Dendritic cell treated with granulocyte-macrophage colony-stimulating factor and Interleukin-4, amounts not matched to agents 40 ng/mL and 50 ng/mL, for 4 days (primary cell): ENCODE measurements at regions of chr2 and their contacts with region 1.

Region 1: GRCh38 chr2:200525882-200526651 is at the start of gene SGO2:
- H3K4me3 Mint-ChIP-seq: peak within 1 kb of the TSS; percentile 86
- H3K27ac Mint-ChIP-seq: peak within 1 kb of the TSS; percentile 82
- H3K4me1 Mint-ChIP-seq: peaks cover 17% of the 10 kb centered on the region
- H3K27me3 Mint-ChIP-seq: peaks cover 5% of the 10 kb centered on the region

Region 2: GRCh38 chr2:200509612-200510433 is 16.2 kb before region 1 on chr2 and contains the start of gene KCTD18:
- intact Hi-C with region 1: loop called (anchors 1 kb)
- H3K4me3 Mint-ChIP-seq: peak within 1 kb of the TSS; percentile 88
- H3K27ac Mint-ChIP-seq: peak within 1 kb of the TSS; percentile 81
- H3K4me1 Mint-ChIP-seq: peaks cover 19% of the 10 kb centered on the region
- H3K27me3 Mint-ChIP-seq: no peaks in the 10 kb centered on the region